A549 (cell line): ENCODE measurements at regions of chr9 and their contacts with region 1.

Region 1: GRCh38 chr9:98192503-98193335 is at the start of gene CORO2A:
- DNase-seq: peak; percentile 71 to 80
- ATAC-seq: peak; percentile 80 to 89
- H3K4me3 ChIP-seq: peak within 1 kb of the TSS; percentile 74
- H3K27ac ChIP-seq: peak within 1 kb of the TSS; percentile 73 to 87
- H3K4me1 ChIP-seq: peaks cover 11% of the 10 kb centered on the region; the same call in 2 of the 3 replicates
- CTCF ChIP-seq: peak; percentile 54
- EP300 ChIP-seq: no peak
- POLR2A ChIP-seq: peak; percentile 51; the same call in 1 of the 2 replicates
- RAD21 ChIP-seq: peak; percentile 29 to 33; a peak in 1 of 5 replicates
- polyA plus RNA-seq, gene CORO2A: 2.0 and 3.1 TPM in 2 replicates

Region 2: GRCh38 chr9:98074115-98074990 is 118.4 kb before region 1 on chr9:
- CTCF ChIA-PET with region 1: interaction called, 18 read pairs
- POLR2A ChIA-PET with region 1: no interaction called
- DNase-seq: peak; percentile 55 to 65
- ATAC-seq: peak; percentile 72 to 81
- H3K4me3 ChIP-seq: no peak overlapping the region
- H3K27ac ChIP-seq: peak overlapping the region; percentile 54 to 70; a peak in 5 of 6 replicates
- H3K4me1 ChIP-seq: peaks cover 28% of the 10 kb centered on the region
- CTCF ChIP-seq: peak; percentile 91
- EP300 ChIP-seq: no peak
- POLR2A ChIP-seq: no peak
- RAD21 ChIP-seq: peak; percentile 82 to 86

Region 3: GRCh38 chr9:98178874-98179850 is 13.6 kb before region 1 on chr9:
- CTCF ChIA-PET with region 1: interaction called, 10 read pairs
- POLR2A ChIA-PET with region 1: no interaction called
- DNase-seq: no peak
- ATAC-seq: no peak
- H3K4me3 ChIP-seq: no peak overlapping the region
- H3K27ac ChIP-seq: no peak overlapping the region
- H3K4me1 ChIP-seq: no peaks in the 10 kb centered on the region
- CTCF ChIP-seq: no peak
- EP300 ChIP-seq: no peak
- POLR2A ChIP-seq: no peak
- RAD21 ChIP-seq: no peak

Region 4: DNA sequence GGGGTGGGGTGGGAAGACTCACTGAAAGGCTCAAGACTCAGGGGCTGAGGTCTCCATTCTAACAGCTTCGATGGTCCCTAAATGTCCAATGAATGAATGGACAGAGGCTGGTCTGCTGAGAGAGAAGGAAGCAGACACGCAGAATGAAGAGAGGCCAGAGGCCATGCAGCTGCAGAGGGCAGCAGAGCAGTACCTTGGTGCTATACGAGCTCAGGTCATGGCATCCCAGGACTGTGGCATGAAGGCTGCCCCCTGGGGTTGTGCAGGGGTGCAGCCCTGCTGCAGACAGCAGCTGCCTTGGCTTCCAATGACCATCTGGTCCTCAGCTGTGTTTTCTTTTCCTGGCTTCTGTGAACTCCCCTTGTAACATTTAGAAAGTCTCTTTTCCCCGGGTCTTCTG is 14.9 kb after region 1 on chr9:
- CTCF ChIA-PET with region 1: interaction called, 45 read pairs
- POLR2A ChIA-PET with region 1: no interaction called
- DNase-seq: no peak
- ATAC-seq: peak; percentile 31 to 40; a peak in 2 of 6 replicates
- H3K4me3 ChIP-seq: no peak overlapping the region
- H3K27ac ChIP-seq: no peak overlapping the region
- H3K4me1 ChIP-seq: peaks cover 3% of the 10 kb centered on the region; the same call in 1 of the 3 replicates
- CTCF ChIP-seq: no peak
- EP300 ChIP-seq: no peak
- POLR2A ChIP-seq: no peak
- RAD21 ChIP-seq: 0 out of 5 replicates have a peak, but pooled peaks of 1 of the 2 experiments have one; percentile 7

Region 5: GRCh38 chr9:98255578-98256296 is 63.0 kb after region 1 on chr9 and contains the start of gene TBC1D2:
- CTCF ChIA-PET with region 1: interaction called, 12 read pairs
- POLR2A ChIA-PET with region 1: interaction called, 5 read pairs
- DNase-seq: peak; percentile 92 to 94
- ATAC-seq: peak; percentile 85 to 94
- H3K4me3 ChIP-seq: peak within 1 kb of the TSS; percentile 79
- H3K27ac ChIP-seq: peak within 1 kb of the TSS; percentile 86 to 90
- H3K4me1 ChIP-seq: peaks cover 45% of the 10 kb centered on the region
- CTCF ChIP-seq: no peak
- EP300 ChIP-seq: no peak
- POLR2A ChIP-seq: peak; percentile 83
- RAD21 ChIP-seq: no peak
- polyA plus RNA-seq, gene TBC1D2: 3.3 and 4.1 TPM in 2 replicates

Region 6: DNA sequence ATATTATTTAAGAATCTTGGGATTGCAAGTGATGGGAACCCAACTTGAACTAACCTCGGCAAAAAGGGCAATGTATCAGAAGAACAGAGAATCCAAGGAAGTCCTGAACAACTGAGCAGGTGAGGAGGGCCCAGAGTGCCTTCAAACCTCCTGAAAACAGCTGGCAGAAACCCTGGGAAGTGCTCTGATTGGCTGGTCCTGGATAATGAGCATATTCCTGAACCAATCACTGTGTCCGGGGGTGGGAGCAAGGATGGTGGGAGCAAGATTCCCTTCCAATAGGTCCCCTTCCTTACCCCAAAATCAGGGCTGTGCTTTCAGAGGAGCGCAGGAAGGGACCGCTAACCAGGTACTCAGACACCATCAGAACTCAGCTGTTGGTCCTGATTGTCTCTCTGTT is 94.7 kb after region 1 on chr9:
- CTCF ChIA-PET with region 1: no interaction called
- POLR2A ChIA-PET with region 1: no interaction called
- DNase-seq: peak in 1 of 2 experiments; percentile 22
- ATAC-seq: peak in 1 of 2 experiments; percentile 63; a peak in 3 of 6 replicates
- H3K4me3 ChIP-seq: no peak overlapping the region
- H3K27ac ChIP-seq: no peak overlapping the region
- H3K4me1 ChIP-seq: no peaks in the 10 kb centered on the region
- CTCF ChIP-seq: no peak
- EP300 ChIP-seq: no peak
- POLR2A ChIP-seq: no peak
- RAD21 ChIP-seq: no peak